PC-3 (cell line): ENCODE measurements at regions of chr13 and their contacts with region 1.

Region 1: DNA sequence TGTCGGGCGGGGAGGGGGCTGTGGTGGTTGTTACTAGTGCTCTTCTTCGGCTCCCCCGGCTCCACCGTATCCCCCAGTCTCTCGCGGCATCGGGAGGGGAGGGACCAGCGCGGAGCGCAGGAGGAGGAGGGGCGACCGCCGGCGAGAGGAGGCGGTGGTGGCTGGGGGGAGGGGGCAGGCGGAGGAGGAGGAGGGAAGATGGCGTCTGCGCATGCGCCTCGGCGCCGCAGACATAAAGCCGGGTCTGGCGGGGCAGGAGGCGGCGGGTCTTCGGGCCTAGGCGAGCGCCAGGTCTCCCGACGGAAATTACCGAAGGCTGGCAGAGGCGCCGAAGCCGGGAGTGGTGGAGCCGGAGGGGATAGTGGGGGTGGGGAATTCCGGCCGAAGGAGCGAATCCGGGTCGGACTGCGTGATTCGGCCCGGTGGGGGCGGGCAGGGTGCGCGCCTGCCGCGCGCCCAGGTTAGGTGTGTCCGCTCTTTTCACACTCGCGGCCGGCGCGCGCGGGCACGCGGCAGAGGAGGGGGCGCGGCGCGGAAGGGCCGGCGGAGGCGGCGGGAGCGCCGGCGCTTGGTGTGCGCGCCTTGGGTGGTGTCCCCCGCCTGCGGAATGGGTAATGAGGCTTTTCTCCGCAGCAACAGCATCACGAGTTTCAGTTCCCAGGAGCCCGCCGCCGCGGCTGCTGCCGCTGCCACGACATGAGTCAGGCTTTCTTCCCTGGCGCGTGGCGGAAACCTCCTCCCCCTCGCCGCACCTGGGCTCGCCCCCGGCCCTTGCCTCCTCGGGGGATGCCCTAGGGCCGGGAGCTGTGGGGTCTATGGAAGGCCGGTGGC is 1.3 kb upstream of the TSC22D1 start:
- DNase-seq: peak; percentile 93
- ATAC-seq: peak; percentile 68
- H3K4me3 ChIP-seq: peak overlapping the region; percentile 84
- H3K27ac ChIP-seq: peak overlapping the region; percentile 80
- H3K4me1 ChIP-seq: peaks cover 36% of the 10 kb centered on the region
- H3K27me3 ChIP-seq: no peaks in the 10 kb centered on the region
- CTCF ChIP-seq: no peak

Region 2: DNA sequence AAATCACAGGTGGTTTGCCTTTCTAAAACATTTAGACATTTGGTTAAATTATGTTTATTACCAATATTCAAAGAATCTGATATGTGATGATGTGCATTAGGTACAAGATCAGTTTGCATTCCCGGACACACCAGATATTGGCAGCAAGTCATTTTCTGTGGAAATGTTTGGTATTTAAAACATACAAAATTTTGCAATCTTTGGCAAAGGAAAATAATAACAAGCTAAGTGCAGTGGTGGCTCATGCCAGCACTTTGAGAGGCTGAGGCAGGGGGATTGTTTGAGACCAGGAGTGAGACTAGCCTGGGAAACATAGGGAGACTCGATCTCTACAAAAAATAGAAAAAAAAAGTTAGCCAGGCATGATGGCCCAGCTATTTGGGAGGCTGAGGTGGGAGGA is 27.8 kb after region 1 on chr13:
- CTCF ChIA-PET with region 1: no interaction called
- POLR2A ChIA-PET with region 1: no interaction called
- intact Hi-C with region 1: no loop called
- DNase-seq: no peak
- ATAC-seq: no peak
- H3K4me3 ChIP-seq: no peak overlapping the region
- H3K27ac ChIP-seq: no peak overlapping the region
- H3K4me1 ChIP-seq: no peaks in the 10 kb centered on the region
- H3K27me3 ChIP-seq: no peaks in the 10 kb centered on the region
- CTCF ChIP-seq: no peak

Region 3: DNA sequence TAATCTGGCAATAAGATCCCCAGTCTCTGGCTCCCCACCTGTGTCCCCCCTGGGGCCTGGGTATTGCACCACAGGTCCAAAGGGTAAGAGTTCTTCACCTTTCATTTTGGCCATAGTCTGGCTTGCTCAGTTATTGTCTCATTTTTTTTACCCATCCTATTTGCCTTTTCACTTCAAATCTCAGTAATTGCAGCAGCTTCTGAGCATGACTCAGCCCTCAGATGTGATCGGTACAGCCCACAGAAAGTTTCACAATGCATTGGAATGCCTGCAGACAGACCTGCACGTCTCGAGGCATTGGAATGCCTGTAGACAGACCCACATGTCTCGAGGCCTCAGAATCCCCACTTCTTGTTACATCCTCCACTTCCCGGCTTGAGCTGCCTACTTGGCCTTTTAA is 238.2 kb after region 1 on chr13:
- CTCF ChIA-PET with region 1: no interaction called
- POLR2A ChIA-PET with region 1: no interaction called
- intact Hi-C with region 1: loop called (anchors 2 kb)
- DNase-seq: peak; percentile 91
- ATAC-seq: peak; percentile 81
- H3K4me3 ChIP-seq: no peak overlapping the region
- H3K27ac ChIP-seq: peak overlapping the region; percentile 95
- H3K4me1 ChIP-seq: peaks cover 66% of the 10 kb centered on the region
- H3K27me3 ChIP-seq: no peaks in the 10 kb centered on the region
- CTCF ChIP-seq: no peak

Region 4: GRCh38 chr13:44917589-44918325 is 340.3 kb after region 1 on chr13:
- CTCF ChIA-PET with region 1: no interaction called
- POLR2A ChIA-PET with region 1: no interaction called
- intact Hi-C with region 1: loop called (anchors 1 kb)
- DNase-seq: peak; percentile 92
- ATAC-seq: peak; percentile 52
- H3K4me3 ChIP-seq: peak overlapping the region; percentile 71
- H3K27ac ChIP-seq: peak overlapping the region; percentile 94
- H3K4me1 ChIP-seq: peaks cover 28% of the 10 kb centered on the region
- H3K27me3 ChIP-seq: no peaks in the 10 kb centered on the region
- CTCF ChIP-seq: no peak